GM12878 (cell line): ENCODE measurements at regions of chr1 and their contacts with region 1.

Region 1: DNA sequence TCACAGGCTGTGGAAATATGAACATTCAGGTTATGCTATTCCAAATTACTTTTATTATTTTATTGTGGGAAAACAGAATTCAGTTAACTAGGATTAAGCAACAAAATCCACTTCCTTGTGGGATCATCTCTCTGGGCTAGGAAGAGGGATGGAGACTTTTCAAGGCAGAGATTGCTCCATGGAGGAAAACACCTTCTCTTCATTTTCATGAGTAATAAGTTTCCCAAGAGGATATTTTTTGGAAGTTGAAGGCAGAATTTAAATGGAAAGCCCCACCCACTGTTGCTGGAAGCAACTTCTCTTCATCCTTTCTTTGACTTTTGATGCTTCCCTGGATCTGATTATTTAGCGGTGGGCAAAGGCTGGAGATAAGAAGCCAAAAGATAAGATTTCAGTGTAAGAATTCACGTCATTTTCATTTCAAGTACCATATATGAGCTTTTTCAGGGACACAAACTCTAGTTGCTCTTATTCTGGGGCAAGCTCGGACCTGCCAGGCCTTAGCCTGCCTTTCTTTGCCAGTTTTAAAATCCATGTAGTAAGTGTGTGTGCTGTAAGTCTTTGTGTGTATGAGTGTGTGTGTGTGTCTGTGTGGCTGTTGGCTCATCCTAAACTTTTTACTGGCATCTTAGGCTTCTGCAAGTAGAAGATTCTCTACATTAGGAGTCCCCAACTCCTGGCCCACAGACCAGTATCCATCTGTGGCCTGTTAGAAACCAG is 11.7 kb upstream of the IL24 start:
- DNase-seq: no peak
- ATAC-seq: no peak
- H3K4me3 ChIP-seq: no peak overlapping the region
- H3K27ac ChIP-seq: no peak overlapping the region
- H3K4me1 ChIP-seq: no peaks in the 10 kb centered on the region
- H3K27me3 ChIP-seq: no peaks in the 10 kb centered on the region
- CTCF ChIP-seq: no peak
- EP300 ChIP-seq: no peak
- POLR2A ChIP-seq: no peak
- RAD21 ChIP-seq: no peak

Region 2: DNA sequence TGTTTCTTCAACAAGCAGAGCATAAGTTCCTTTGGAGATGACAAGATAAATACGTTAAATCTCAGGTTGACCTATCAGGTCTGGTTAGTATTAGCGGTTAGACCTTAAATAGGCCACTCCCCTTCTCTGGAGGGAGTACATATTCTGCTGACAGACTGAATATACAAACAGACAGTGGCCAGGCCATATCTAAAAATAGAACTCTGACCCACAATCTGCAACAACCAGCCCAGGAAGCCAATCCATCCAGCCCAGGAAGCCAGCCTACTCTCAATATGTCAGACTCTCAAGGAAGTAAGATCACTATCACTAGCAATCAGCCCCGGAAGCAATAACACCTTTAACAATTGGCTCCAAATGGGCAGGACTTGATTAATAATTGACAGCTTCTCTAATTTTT is 13.4 kb before region 1 on chr1:
- CTCF ChIA-PET with region 1: interaction called, 22 read pairs
- POLR2A ChIA-PET with region 1: interaction called, 3 read pairs
- RAD21 ChIA-PET with region 1: interaction called, 4 read pairs
- SMC1A ChIA-PET with region 1: interaction called, 10 read pairs
- in situ Hi-C with region 1: no loop called
- intact Hi-C with region 1: no loop called
- DNase-seq: no peak
- ATAC-seq: no peak
- H3K4me3 ChIP-seq: no peak overlapping the region
- H3K27ac ChIP-seq: no peak overlapping the region
- H3K4me1 ChIP-seq: no peaks in the 10 kb centered on the region
- H3K27me3 ChIP-seq: no peaks in the 10 kb centered on the region; a peak in 1 of 4 replicates
- CTCF ChIP-seq: no peak
- EP300 ChIP-seq: no peak
- POLR2A ChIP-seq: no peak
- RAD21 ChIP-seq: no peak